Naive thymus-derived CD4-positive, alpha-beta T cell (primary cell): ENCODE measurements at regions of chr4 and their contacts with region 1.

Region 1: DNA sequence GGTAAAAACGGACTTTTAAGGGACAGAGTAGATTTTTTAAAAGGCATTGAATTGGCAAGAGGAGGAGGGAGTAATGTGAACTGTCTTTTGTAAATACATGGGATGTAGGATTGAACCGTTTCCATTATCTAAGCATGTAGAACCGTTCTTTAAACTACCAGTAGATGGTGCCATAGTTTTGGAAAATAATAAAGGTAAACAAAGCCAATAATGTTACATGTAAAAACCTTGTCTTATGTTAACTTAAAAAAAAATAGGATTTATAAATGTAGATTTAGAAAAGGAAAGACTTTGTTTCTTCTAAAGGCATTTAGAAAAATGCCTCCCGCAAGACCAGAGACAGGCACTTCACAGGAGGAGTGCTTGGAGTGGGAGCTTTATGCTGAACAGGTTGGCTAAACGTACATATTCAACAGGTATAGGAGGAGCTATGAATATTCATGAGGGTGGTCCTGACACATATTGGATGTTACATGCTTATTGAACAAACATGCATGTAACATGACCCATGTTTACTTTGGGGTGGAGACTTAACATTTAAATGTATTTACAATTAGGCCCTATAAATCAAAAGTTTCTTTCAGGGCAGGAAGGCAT is 45.5 kb upstream of the FAM241A start:
- DNase-seq: peak in 7 of 9 donors; percentile 15 to 58 (median 41)
- ATAC-seq: peak; percentile 72
- H3K4me3 ChIP-seq: no peak overlapping the region
- H3K4me3 Mint-ChIP-seq: no peak overlapping the region
- H3K27ac ChIP-seq: no peak overlapping the region
- H3K27ac Mint-ChIP-seq: peak overlapping the region in 1 of 9 donors; percentile 25
- H3K4me1 ChIP-seq: no peaks in the 10 kb centered on the region
- H3K4me1 Mint-ChIP-seq: peaks cover 0 to 13% (median 0%) of the 10 kb centered on the region in 7 donors
- H3K27me3 ChIP-seq: no peaks in the 10 kb centered on the region
- H3K27me3 Mint-ChIP-seq: peaks cover 4 to 29% (median 10%) of the 10 kb centered on the region in 5 donors

Region 2: DNA sequence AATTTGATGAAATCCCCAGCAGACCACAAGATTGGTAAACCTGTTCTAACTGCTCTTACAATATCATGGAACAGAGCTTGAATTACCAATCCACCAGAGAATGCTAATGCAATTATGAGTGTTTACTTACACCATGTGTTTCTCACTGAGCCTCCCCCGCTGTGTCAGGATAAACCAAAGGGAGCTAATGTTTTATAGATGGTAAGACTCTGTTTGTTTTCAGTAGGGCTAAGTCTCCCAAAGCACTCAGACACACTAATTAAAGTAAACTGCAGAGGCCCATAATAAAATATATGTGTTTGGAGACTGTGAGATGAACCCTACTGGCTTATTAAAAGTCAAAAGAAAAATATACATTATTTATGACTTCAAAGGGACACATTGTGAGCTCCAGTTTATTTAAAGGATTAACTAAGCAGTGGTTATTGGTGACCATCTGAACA is 216.2 kb before region 1 on chr4:
- CTCF ChIA-PET with region 1: no interaction called
- POLR2A ChIA-PET with region 1: no interaction called
- intact Hi-C with region 1: no loop called
- DNase-seq: no peak
- ATAC-seq: no peak
- H3K4me3 ChIP-seq: no peak overlapping the region
- H3K4me3 Mint-ChIP-seq: no peak overlapping the region
- H3K27ac ChIP-seq: no peak overlapping the region
- H3K27ac Mint-ChIP-seq: no peak overlapping the region
- H3K4me1 ChIP-seq: no peaks in the 10 kb centered on the region
- H3K4me1 Mint-ChIP-seq: no peaks in the 10 kb centered on the region
- H3K27me3 ChIP-seq: no peaks in the 10 kb centered on the region
- H3K27me3 Mint-ChIP-seq: no peaks in the 10 kb centered on the region

Region 3: GRCh38 chr4:112075129-112075753 is 24.6 kb before region 1 on chr4:
- CTCF ChIA-PET with region 1: interaction called, 3 read pairs
- POLR2A ChIA-PET with region 1: no interaction called
- intact Hi-C with region 1: loop called in 1 of 2 experiments (anchors 1 kb)
- DNase-seq: peak in 6 of 9 donors; percentile 2 to 43 (median 25)
- ATAC-seq: peak; percentile 77
- H3K4me3 ChIP-seq: no peak overlapping the region
- H3K4me3 Mint-ChIP-seq: no peak overlapping the region
- H3K27ac ChIP-seq: no peak overlapping the region
- H3K27ac Mint-ChIP-seq: no peak overlapping the region
- H3K4me1 ChIP-seq: no peaks in the 10 kb centered on the region
- H3K4me1 Mint-ChIP-seq: no peaks in the 10 kb centered on the region
- H3K27me3 ChIP-seq: no peaks in the 10 kb centered on the region
- H3K27me3 Mint-ChIP-seq: peaks cover 5 to 27% (median 10%) of the 10 kb centered on the region in 5 donors

Region 4: GRCh38 chr4:112145326-112145819 is 45.6 kb after region 1 on chr4 and contains the start of gene FAM241A:
- CTCF ChIA-PET with region 1: interaction called, 3 read pairs
- POLR2A ChIA-PET with region 1: no interaction called
- intact Hi-C with region 1: loop called (anchors 1 to 2 kb)
- DNase-seq: peak; percentile 81 to 92 (median 88)
- ATAC-seq: peak; percentile 98
- H3K4me3 ChIP-seq: peak within 1 kb of the TSS; percentile 89
- H3K4me3 Mint-ChIP-seq: peak within 1 kb of the TSS; percentile 90 to 99 (median 94)
- H3K27ac ChIP-seq: peak within 1 kb of the TSS; percentile 78
- H3K27ac Mint-ChIP-seq: peak within 1 kb of the TSS; percentile 75 to 98 (median 95)
- H3K4me1 ChIP-seq: peaks cover 0 to 12% of the 10 kb centered on the region in 2 donors
- H3K4me1 Mint-ChIP-seq: peaks cover 16 to 44% (median 40%) of the 10 kb centered on the region in 7 donors
- H3K27me3 ChIP-seq: no peaks in the 10 kb centered on the region
- H3K27me3 Mint-ChIP-seq: peaks cover 0 to 5% (median 0%) of the 10 kb centered on the region in 5 donors
- total RNA-seq, gene FAM241A: 1.2 to 2.4 (median 2.0) TPM

Region 5: DNA sequence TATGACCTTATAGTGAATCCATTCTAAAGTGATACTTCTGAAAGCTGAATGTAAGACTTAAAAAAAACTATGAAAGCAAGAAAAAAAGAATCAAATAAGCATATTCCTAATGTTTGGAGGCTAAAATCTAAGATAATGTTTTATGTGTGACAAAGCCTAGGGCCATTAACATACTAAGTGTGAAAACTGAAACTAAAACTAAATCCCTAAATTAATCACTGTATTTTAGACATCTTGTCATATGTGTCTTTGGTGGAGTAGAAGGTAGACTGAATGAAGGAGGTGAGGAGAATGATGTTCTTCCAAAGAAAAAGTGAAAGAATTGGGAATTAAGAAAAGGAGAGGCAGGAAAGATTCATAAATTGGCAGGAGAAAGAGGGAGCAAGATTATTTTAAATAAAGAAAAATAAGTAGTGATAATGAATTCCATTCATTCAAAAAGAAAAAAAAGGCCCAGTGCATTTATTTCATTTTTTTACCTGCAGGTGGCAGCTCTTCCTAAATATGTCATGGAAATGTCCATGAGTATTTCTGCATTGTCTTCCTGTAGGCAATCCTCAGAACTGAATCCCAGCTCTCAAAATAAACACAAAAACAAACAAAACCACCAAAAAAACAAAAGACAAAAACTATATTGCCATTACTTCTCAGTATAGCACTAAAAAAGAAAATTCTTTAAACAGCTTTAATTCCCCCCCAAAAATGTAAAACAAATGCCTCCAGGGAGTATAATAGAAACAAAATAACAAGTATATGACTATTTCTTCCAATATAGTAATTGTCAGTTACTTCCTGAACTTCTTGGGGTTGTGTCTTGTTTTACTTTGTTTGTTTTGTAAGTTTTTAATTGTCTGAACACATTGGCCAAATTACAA is 114.8 kb after region 1 on chr4:
- CTCF ChIA-PET with region 1: interaction called, 5 read pairs
- POLR2A ChIA-PET with region 1: no interaction called
- intact Hi-C with region 1: loop called in 1 of 2 experiments (anchors 1 kb)
- DNase-seq: peak in 3 of 9 donors; percentile 16 to 26 (median 20)
- ATAC-seq: no peak
- H3K4me3 ChIP-seq: no peak overlapping the region
- H3K4me3 Mint-ChIP-seq: no peak overlapping the region
- H3K27ac ChIP-seq: no peak overlapping the region
- H3K27ac Mint-ChIP-seq: peak overlapping the region in 2 of 9 donors; percentile 5 to 7
- H3K4me1 ChIP-seq: no peaks in the 10 kb centered on the region
- H3K4me1 Mint-ChIP-seq: peaks cover 0 to 9% (median 4%) of the 10 kb centered on the region in 7 donors
- H3K27me3 ChIP-seq: no peaks in the 10 kb centered on the region
- H3K27me3 Mint-ChIP-seq: peaks cover 0 to 6% (median 0%) of the 10 kb centered on the region in 5 donors

Region 6: GRCh38 chr4:112321776-112322684 is 222.2 kb after region 1 on chr4:
- CTCF ChIA-PET with region 1: interaction called, 4 read pairs
- POLR2A ChIA-PET with region 1: no interaction called
- intact Hi-C with region 1: loop called (anchors 1 to 2 kb)
- DNase-seq: peak; percentile 44 to 74 (median 71)
- ATAC-seq: peak; percentile 96
- H3K4me3 ChIP-seq: no peak overlapping the region
- H3K4me3 Mint-ChIP-seq: peak overlapping the region in 7 of 10 donors; percentile 27 to 75 (median 62)
- H3K27ac ChIP-seq: no peak overlapping the region
- H3K27ac Mint-ChIP-seq: peak overlapping the region in 3 of 9 donors; percentile 15 to 59 (median 38)
- H3K4me1 ChIP-seq: no peaks in the 10 kb centered on the region
- H3K4me1 Mint-ChIP-seq: peaks cover 10 to 34% (median 14%) of the 10 kb centered on the region in 7 donors
- H3K27me3 ChIP-seq: no peaks in the 10 kb centered on the region
- H3K27me3 Mint-ChIP-seq: no peaks in the 10 kb centered on the region

Region 7: GRCh38 chr4:112765317-112765975 is 665.6 kb after region 1 on chr4:
- CTCF ChIA-PET with region 1: interaction called, 3 read pairs
- POLR2A ChIA-PET with region 1: no interaction called
- intact Hi-C with region 1: loop called in 1 of 2 experiments (anchors 10 kb)
- DNase-seq: peak in 1 of 9 donors; percentile 6
- ATAC-seq: no peak
- H3K4me3 ChIP-seq: no peak overlapping the region
- H3K4me3 Mint-ChIP-seq: no peak overlapping the region
- H3K27ac ChIP-seq: no peak overlapping the region
- H3K27ac Mint-ChIP-seq: no peak overlapping the region
- H3K4me1 ChIP-seq: no peaks in the 10 kb centered on the region
- H3K4me1 Mint-ChIP-seq: peaks cover 0 to 4% (median 2%) of the 10 kb centered on the region in 7 donors
- H3K27me3 ChIP-seq: no peaks in the 10 kb centered on the region
- H3K27me3 Mint-ChIP-seq: peaks cover 3 to 9% (median 4%) of the 10 kb centered on the region in 5 donors